Heart right ventricle (tissue), 16 donors: ENCODE measurements at regions of chr15 and their contacts with region 1.

Region 1: GRCh38 chr15:41811432-41812195 is 16.3 kb upstream of the JMJD7 start:
- DNase-seq: peak; percentile 86
- ATAC-seq: peak; percentile 85 to 96 (median 92)
- H3K4me3 ChIP-seq: no peak overlapping the region
- H3K27ac ChIP-seq: no peak overlapping the region
- H3K4me1 ChIP-seq: peaks cover 0 to 20% (median 6%) of the 10 kb centered on the region in 9 donors
- H3K27me3 ChIP-seq: no peaks in the 10 kb centered on the region
- CTCF ChIP-seq: peak; percentile 77 to 95 (median 92)

Region 2: GRCh38 chr15:41465822-41466421 is 345.7 kb before region 1 on chr15:
- intact Hi-C with region 1: loop called in 1 of 10 experiments (anchors 10 kb)
- DNase-seq: no peak
- ATAC-seq: no peak
- H3K4me3 ChIP-seq: no peak overlapping the region
- H3K27ac ChIP-seq: no peak overlapping the region
- H3K4me1 ChIP-seq: no peaks in the 10 kb centered on the region
- H3K27me3 ChIP-seq: no peaks in the 10 kb centered on the region
- CTCF ChIP-seq: peak; percentile 34 to 87 (median 68)

Region 3: DNA sequence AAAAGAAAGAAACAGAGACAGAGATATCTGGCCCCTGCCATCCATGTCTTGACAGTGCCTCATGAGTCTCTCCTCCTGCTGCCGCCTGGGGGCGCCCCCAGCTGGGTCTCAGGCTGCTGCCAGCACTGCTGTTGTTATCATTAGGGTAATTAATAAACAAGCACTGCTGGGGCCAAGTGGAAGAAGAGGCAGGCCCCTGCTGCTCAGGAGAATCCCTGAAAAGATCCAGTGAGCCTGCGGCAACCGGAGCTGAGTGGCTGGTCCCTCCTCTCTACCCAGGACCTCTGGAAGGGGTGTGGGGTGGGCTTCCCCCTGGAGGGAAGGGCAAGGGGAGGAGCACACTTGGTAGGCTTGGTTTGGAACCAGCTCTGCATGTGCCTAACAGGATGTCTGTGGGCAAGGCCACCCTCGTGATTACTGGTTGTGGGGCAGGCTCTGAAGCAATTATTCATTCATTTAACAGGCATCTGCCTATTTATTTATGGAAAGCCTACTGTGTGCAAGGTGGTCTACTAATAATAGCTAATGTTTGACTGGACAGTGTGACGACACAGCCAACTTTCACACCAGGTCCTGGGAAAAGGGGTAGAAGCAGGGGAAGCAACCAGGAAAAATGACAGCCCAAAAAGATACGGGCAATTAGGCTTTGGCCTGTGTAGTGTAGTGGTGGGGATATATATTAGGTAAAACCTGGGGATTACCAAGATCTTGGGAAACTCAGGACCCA is 253.8 kb before region 1 on chr15:
- intact Hi-C with region 1: loop called in 5 of 10 experiments (anchors 5 to 10 kb)
- DNase-seq: peak in 1 of 2 donors; percentile 64
- ATAC-seq: peak; percentile 53 to 81 (median 75)
- H3K4me3 ChIP-seq: peak overlapping the region in 8 of 10 donors; percentile 44 to 74 (median 58)
- H3K27ac ChIP-seq: peak overlapping the region in 4 of 10 donors; percentile 7 to 78 (median 44)
- H3K4me1 ChIP-seq: peaks cover 6 to 58% (median 29%) of the 10 kb centered on the region in 9 donors
- H3K27me3 ChIP-seq: peaks cover 0 to 16% (median 0%) of the 10 kb centered on the region in 7 donors
- CTCF ChIP-seq: peak; percentile 60 to 94 (median 84)

Region 4: DNA sequence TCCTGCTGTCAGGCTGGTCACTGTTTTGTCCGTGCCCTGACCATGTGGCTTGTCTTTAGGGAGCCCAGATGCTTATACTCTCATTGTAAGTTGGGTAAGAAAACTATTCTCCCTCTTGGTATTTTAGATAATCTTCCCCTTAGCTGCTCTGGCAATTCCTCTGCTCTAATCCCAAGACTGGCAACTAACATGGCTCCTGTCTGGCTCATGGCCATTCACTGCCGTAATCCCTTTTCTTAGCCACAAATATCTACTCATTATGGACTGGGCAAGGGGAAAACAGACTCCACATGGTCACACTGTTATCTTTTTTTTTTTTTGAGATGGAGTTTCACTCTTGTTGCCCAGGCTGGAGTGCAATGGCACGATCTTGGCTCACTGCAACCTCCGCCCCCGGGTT is 213.8 kb before region 1 on chr15:
- intact Hi-C with region 1: loop called in 7 of 10 experiments (anchors 5 to 10 kb)
- DNase-seq: no peak
- ATAC-seq: no peak
- H3K4me3 ChIP-seq: no peak overlapping the region
- H3K27ac ChIP-seq: no peak overlapping the region
- H3K4me1 ChIP-seq: no peaks in the 10 kb centered on the region
- H3K27me3 ChIP-seq: peaks cover 0 to 2% (median 0%) of the 10 kb centered on the region in 7 donors
- CTCF ChIP-seq: no peak

Region 5: GRCh38 chr15:41603941-41604911 is 207.4 kb before region 1 on chr15:
- intact Hi-C with region 1: loop called in 7 of 10 experiments (anchors 5 to 10 kb)
- DNase-seq: peak; percentile 47 to 66
- ATAC-seq: peak; percentile 83 to 95 (median 90)
- H3K4me3 ChIP-seq: peak overlapping the region in 7 of 10 donors; percentile 17 to 41 (median 34)
- H3K27ac ChIP-seq: no peak overlapping the region
- H3K4me1 ChIP-seq: peaks cover 0 to 14% (median 9%) of the 10 kb centered on the region in 9 donors
- H3K27me3 ChIP-seq: no peaks in the 10 kb centered on the region
- CTCF ChIP-seq: peak; percentile 65 to 87 (median 77)

Region 6: GRCh38 chr15:41695750-41696426 is 115.7 kb before region 1 on chr15:
- intact Hi-C with region 1: loop called in 1 of 10 experiments (anchors 10 kb)
- DNase-seq: peak in 1 of 2 donors; percentile 13
- ATAC-seq: peak in 5 of 8 donors; percentile 53 to 67 (median 64)
- H3K4me3 ChIP-seq: no peak overlapping the region
- H3K27ac ChIP-seq: peak overlapping the region in 1 of 10 donors; percentile 24
- H3K4me1 ChIP-seq: peaks cover 0 to 33% (median 19%) of the 10 kb centered on the region in 9 donors
- H3K27me3 ChIP-seq: no peaks in the 10 kb centered on the region
- CTCF ChIP-seq: peak in 4 of 9 donors; percentile 33 to 47 (median 44)

Region 7: GRCh38 chr15:41774062-41774881 is 37.3 kb before region 1 on chr15 and contains the start of gene MAPKBP1:
- intact Hi-C with region 1: loop called (anchors 1 to 5 kb)
- DNase-seq: peak; percentile 96 to 97
- ATAC-seq: peak; percentile 96 to 99 (median 98)
- H3K4me3 ChIP-seq: peak within 1 kb of the TSS; percentile 45 to 85 (median 77)
- H3K27ac ChIP-seq: peak within 1 kb of the TSS; percentile 52 to 88 (median 84)
- H3K4me1 ChIP-seq: peaks cover 13 to 55% (median 43%) of the 10 kb centered on the region in 9 donors
- H3K27me3 ChIP-seq: no peaks in the 10 kb centered on the region
- CTCF ChIP-seq: peak; percentile 29 to 84 (median 64)
- total RNA-seq, gene MAPKBP1: 8.3 to 17.0 (median 13.3) TPM

Region 8: DNA sequence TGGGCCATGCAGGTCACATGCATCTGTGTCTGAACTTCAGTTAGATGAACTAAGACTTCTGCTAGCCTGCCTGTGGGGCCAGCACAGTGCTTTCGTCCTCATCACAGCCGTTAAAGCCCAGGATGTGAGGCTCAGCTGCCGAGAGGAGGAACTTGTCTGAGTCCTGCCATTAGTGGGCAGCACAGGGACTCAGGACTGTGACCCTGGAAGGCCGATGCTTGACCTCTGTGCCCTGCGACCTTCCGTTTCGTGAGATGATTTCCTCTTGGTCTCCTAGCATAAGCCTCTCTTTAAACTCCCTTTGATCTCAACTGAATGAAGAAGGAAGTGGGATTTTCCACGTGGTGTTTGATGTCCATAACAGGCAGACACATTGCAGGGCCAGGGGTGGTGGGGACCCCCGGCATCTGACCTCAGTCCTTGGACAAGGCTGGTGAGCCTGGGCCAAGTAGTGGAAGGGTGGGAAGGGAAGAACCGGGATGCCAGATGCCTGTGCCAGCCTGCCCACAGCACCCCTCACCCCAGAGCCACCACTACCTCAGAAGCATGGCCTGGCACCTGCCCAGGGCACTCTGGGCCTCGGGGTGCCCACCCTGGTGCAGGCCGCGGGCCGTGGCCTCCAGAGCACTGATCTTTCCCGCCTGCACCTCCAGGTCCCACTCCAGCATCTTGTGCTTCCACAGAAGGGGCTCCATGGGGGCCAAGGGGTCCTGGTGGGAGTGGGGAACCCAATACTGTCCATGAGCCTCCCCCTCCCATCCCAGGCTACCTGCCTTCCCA is 48.6 kb after region 1 on chr15:
- intact Hi-C with region 1: no loop called
- DNase-seq: no peak
- ATAC-seq: peak in 3 of 8 donors; percentile 26 to 42 (median 34)
- H3K4me3 ChIP-seq: no peak overlapping the region
- H3K27ac ChIP-seq: no peak overlapping the region
- H3K4me1 ChIP-seq: peaks cover 0 to 5% (median 0%) of the 10 kb centered on the region in 9 donors
- H3K27me3 ChIP-seq: no peaks in the 10 kb centered on the region
- CTCF ChIP-seq: peak in 4 of 9 donors; percentile 20 to 37 (median 28)